Activated CD4-positive, alpha-beta memory T cell treated with anti-CD3 and anti-CD28 coated beads, Interleukin-2, amount 10 ng/mL, durations not matched to agents 7 days and 5 days (primary cell): ENCODE measurements at regions of chr11 and their contacts with region 1.

Region 1: GRCh38 chr11:67345920-67346799 is 7.2 kb downstream of the POLD4 start:
- DNase-seq: no peak
- H3K4me3 Mint-ChIP-seq: no peak overlapping the region
- H3K27ac Mint-ChIP-seq: no peak overlapping the region
- H3K4me1 Mint-ChIP-seq: peaks cover 25% of the 10 kb centered on the region
- H3K27me3 Mint-ChIP-seq: no peaks in the 10 kb centered on the region

Region 2: DNA sequence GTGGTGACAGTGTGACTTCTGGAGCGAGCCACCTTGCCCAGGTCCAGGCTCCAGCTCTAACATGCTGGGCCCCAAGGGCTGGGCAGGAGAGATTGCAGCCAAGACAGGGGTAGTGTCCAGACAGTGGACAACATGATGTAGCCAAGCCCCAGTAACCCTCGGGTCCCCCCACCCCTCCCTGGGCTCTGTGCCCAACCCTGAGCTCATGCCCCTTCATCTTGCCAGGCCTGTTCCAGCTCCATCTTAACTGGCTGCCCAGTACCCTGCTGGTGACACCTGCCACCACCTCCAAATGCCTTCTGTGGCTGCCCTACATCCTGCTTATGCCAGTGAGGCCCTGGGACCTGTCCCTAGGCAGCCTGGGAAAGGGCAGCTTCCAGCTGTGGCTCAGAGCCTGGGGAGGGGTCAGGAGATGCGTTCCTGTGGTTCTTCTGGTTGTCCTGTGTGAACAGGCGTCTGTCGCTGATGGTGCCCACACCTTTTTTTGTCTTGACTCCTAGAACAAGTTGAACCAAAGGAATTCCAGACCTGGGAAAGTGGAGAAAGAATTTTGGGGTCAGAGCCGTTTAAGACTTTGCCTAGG is 335.7 kb before region 1 on chr11:
- CTCF ChIA-PET with region 1: no interaction called
- POLR2A ChIA-PET with region 1: no interaction called
- DNase-seq: no peak
- H3K4me3 Mint-ChIP-seq: no peak overlapping the region
- H3K27ac Mint-ChIP-seq: no peak overlapping the region
- H3K4me1 Mint-ChIP-seq: no peaks in the 10 kb centered on the region
- H3K27me3 Mint-ChIP-seq: peaks cover 8% of the 10 kb centered on the region

Region 3: GRCh38 chr11:67045341-67045764 is 300.8 kb before region 1 on chr11:
- CTCF ChIA-PET with region 1: no interaction called
- POLR2A ChIA-PET with region 1: no interaction called
- DNase-seq: no peak
- H3K4me3 Mint-ChIP-seq: no peak overlapping the region
- H3K27ac Mint-ChIP-seq: no peak overlapping the region
- H3K4me1 Mint-ChIP-seq: no peaks in the 10 kb centered on the region
- H3K27me3 Mint-ChIP-seq: peaks cover 7% of the 10 kb centered on the region

Region 4: GRCh38 chr11:67252831-67253239 is 93.3 kb before region 1 on chr11:
- CTCF ChIA-PET with region 1: interaction called, 13 read pairs
- POLR2A ChIA-PET with region 1: interaction called, 5 read pairs
- DNase-seq: peak; percentile 54
- H3K4me3 Mint-ChIP-seq: no peak overlapping the region
- H3K27ac Mint-ChIP-seq: peak overlapping the region; percentile 81
- H3K4me1 Mint-ChIP-seq: peaks cover 47% of the 10 kb centered on the region
- H3K27me3 Mint-ChIP-seq: no peaks in the 10 kb centered on the region

Region 5: GRCh38 chr11:67366546-67366945 is 20.4 kb after region 1 on chr11:
- CTCF ChIA-PET with region 1: interaction called, 847 read pairs
- POLR2A ChIA-PET with region 1: interaction called, 85 read pairs
- DNase-seq: no peak
- H3K4me3 Mint-ChIP-seq: no peak overlapping the region
- H3K27ac Mint-ChIP-seq: no peak overlapping the region
- H3K4me1 Mint-ChIP-seq: peaks cover 52% of the 10 kb centered on the region
- H3K27me3 Mint-ChIP-seq: peaks cover 68% of the 10 kb centered on the region

Region 6: GRCh38 chr11:67373925-67374618 is 27.9 kb after region 1 on chr11:
- CTCF ChIA-PET with region 1: interaction called, 847 read pairs
- POLR2A ChIA-PET with region 1: interaction called, 122 read pairs
- DNase-seq: peak; percentile 55
- H3K4me3 Mint-ChIP-seq: peak overlapping the region; percentile 63
- H3K27ac Mint-ChIP-seq: no peak overlapping the region
- H3K4me1 Mint-ChIP-seq: peaks cover 39% of the 10 kb centered on the region
- H3K27me3 Mint-ChIP-seq: peaks cover 63% of the 10 kb centered on the region

Region 7: GRCh38 chr11:67382276-67383136 is 36.3 kb after region 1 on chr11:
- CTCF ChIA-PET with region 1: interaction called, 847 read pairs
- POLR2A ChIA-PET with region 1: interaction called, 122 read pairs
- DNase-seq: peak; percentile 87
- H3K4me3 Mint-ChIP-seq: no peak overlapping the region
- H3K27ac Mint-ChIP-seq: no peak overlapping the region
- H3K4me1 Mint-ChIP-seq: peaks cover 4% of the 10 kb centered on the region
- H3K27me3 Mint-ChIP-seq: peaks cover 35% of the 10 kb centered on the region

Region 8: GRCh38 chr11:67391304-67392132 is 45.4 kb after region 1 on chr11 and contains the start of gene RAD9A:
- CTCF ChIA-PET with region 1: interaction called, 847 read pairs
- POLR2A ChIA-PET with region 1: no interaction called
- DNase-seq: peak; percentile 95
- H3K4me3 Mint-ChIP-seq: peak within 1 kb of the TSS; percentile 94
- H3K27ac Mint-ChIP-seq: peak within 1 kb of the TSS; percentile 81
- H3K4me1 Mint-ChIP-seq: peaks cover 44% of the 10 kb centered on the region
- H3K27me3 Mint-ChIP-seq: no peaks in the 10 kb centered on the region
- total RNA-seq, gene RAD9A: 48.0 to 53.9 TPM